ENCODE measurements at regions of chr16 and their contacts with region 1.

Region 1: GRCh38 chr16:1312194-1312816 is 2.9 kb downstream of the UBE2I start:
- DNase-seq: no peak
- H3K4me3 ChIP-seq: peak overlapping the region in 4 of 7 experiments; percentile 3 to 98 (median 92)
- H3K27ac ChIP-seq: peak overlapping the region in 1 of 2 experiments; percentile 80
- H3K4me1 ChIP-seq: peaks cover 13 to 30% (median 23%) of the 10 kb centered on the region in 4 experiments
- H3K27me3 ChIP-seq: no peaks in the 10 kb centered on the region

Region 2: GRCh38 chr16:1335996-1336395 is 23.7 kb after region 1 on chr16:
- CTCF ChIA-PET with region 1: interaction called, 10 read pairs
- POLR2A ChIA-PET with region 1: interaction called, 3 read pairs
- DNase-seq: peak; percentile 48 to 69 (median 64)
- H3K4me3 ChIP-seq: no peak overlapping the region
- H3K27ac ChIP-seq: no peak overlapping the region
- H3K4me1 ChIP-seq: peaks cover 0 to 57% (median 36%) of the 10 kb centered on the region in 4 experiments
- H3K27me3 ChIP-seq: peaks cover 0 to 61% (median 21%) of the 10 kb centered on the region in 5 experiments

Region 3: GRCh38 chr16:1597154-1597553 is 284.8 kb after region 1 on chr16:
- CTCF ChIA-PET with region 1: no interaction called
- POLR2A ChIA-PET with region 1: no interaction called
- DNase-seq: no peak
- H3K4me3 ChIP-seq: no peak overlapping the region
- H3K27ac ChIP-seq: no peak overlapping the region
- H3K4me1 ChIP-seq: no peaks in the 10 kb centered on the region
- H3K27me3 ChIP-seq: no peaks in the 10 kb centered on the region